Motor neuron (in vitro differentiated cells): ENCODE measurements at regions of chr22 and their contacts with region 1.

Region 1: GRCh38 chr22:49657275-49657975 is 170.2 kb downstream of the BRD1 start:
- ATAC-seq: peak in 3 of 8 experiments; percentile 28 to 47 (median 34)
- H3K4me3 ChIP-seq: no peak overlapping the region
- H3K27ac ChIP-seq: no peak overlapping the region
- H3K4me1 ChIP-seq: peaks cover 0 to 12% of the 10 kb centered on the region in 2 donors

Region 2: GRCh38 chr22:49404576-49405241 is 252.7 kb before region 1 on chr22:
- in situ Hi-C with region 1: no loop called
- ATAC-seq: peak in 4 of 8 experiments; percentile 27 to 71 (median 53)
- H3K4me3 ChIP-seq: no peak overlapping the region
- H3K27ac ChIP-seq: no peak overlapping the region
- H3K4me1 ChIP-seq: no peaks in the 10 kb centered on the region

Region 3: DNA sequence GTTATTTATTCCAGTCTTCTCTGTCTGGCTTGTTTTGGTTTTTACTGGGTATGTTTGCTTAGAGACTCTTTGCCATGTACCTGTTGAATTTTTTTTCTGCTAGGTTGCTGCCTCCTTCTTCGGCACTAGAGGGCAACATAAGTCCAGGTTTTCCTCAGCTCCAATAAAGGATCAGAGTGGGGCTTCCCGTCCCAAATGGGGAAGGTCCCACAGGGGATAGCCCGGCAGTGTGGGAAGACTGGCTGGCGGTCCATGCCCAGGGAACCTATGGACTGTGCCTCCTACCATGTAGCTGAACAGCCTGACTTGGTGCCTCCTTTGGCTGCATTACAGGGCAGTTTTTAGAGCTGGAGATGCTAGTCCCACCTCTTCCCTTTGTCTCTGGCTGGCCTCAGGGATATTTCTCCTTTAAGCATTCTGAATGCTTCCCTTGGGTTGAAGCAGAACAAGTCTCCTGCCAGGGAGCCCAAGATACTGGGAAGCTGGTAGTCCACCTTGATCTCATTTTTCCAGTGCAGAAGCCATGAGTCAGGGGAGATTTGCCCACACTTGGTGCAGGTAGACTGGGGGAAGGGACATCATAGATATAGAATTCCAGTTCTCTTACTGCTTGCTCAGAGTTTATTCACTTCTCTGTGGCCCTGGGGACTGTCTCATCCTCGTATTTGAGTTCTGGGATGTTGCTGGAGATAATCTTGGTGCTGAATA is 110.1 kb after region 1 on chr22:
- in situ Hi-C with region 1: loop called in 1 of 9 experiments (anchors 25 kb)
- ATAC-seq: peak; percentile 18 to 57 (median 26)
- H3K4me3 ChIP-seq: no peak overlapping the region
- H3K27ac ChIP-seq: no peak overlapping the region
- H3K4me1 ChIP-seq: peaks cover 0 to 2% of the 10 kb centered on the region in 2 donors

Region 4: GRCh38 chr22:50105208-50106100 is 448.0 kb after region 1 on chr22:
- in situ Hi-C with region 1: no loop called
- ATAC-seq: peak in 3 of 8 experiments; percentile 18 to 57 (median 25)
- H3K4me3 ChIP-seq: no peak overlapping the region
- H3K27ac ChIP-seq: no peak overlapping the region
- H3K4me1 ChIP-seq: no peaks in the 10 kb centered on the region